CD14-positive monocyte (primary cell): ENCODE measurements at regions of chr15 and their contacts with region 1.

Region 1: DNA sequence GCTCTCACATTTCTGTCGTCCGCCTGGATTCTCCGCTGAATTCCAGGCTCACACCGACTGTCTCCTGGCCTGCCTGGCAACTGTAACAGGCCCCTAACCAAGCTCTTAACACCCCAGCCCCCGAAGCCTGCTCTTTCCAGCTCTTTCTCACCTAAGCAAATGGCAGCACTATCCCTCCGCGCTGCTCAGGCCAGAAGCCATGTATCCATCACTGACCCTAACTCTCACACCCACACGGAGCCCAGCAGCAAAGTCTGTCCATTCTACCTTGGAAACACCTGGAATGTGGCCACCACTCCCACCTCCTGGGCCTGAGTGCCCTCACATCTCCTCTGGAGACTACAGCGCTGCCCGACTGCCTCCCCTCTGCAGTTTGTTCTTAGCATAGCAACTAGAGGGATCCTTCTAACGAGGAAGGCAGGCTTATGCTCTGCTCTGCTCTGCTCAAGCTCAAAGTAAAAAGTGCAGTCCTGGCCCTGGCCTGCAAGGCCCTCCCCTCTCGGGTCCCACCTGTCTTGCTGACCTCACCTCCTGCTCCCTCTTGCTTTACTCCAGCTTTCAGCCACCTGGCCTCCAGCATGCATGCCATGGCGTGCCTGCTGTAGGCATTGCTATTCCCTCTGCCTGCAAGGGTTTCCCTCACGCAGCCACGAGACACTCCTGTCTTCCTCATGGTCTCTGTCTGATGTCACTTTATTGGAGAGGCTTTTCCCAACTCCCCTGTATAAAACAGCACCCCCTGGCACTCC is 27.2 kb downstream of the FEM1B start:
- DNase-seq: no peak
- H3K4me3 ChIP-seq: no peak overlapping the region
- H3K4me3 Mint-ChIP-seq: no peak overlapping the region
- H3K27ac ChIP-seq: no peak overlapping the region
- H3K27ac Mint-ChIP-seq: no peak overlapping the region
- H3K4me1 ChIP-seq: peaks cover 21 to 25% of the 10 kb centered on the region in 2 donors
- H3K4me1 Mint-ChIP-seq: peaks cover 29% of the 10 kb centered on the region
- H3K27me3 ChIP-seq: no peaks in the 10 kb centered on the region
- H3K27me3 Mint-ChIP-seq: peaks cover 2 to 4% (median 2%) of the 10 kb centered on the region in 3 donors
- CTCF ChIP-seq: no peak

Region 2: DNA sequence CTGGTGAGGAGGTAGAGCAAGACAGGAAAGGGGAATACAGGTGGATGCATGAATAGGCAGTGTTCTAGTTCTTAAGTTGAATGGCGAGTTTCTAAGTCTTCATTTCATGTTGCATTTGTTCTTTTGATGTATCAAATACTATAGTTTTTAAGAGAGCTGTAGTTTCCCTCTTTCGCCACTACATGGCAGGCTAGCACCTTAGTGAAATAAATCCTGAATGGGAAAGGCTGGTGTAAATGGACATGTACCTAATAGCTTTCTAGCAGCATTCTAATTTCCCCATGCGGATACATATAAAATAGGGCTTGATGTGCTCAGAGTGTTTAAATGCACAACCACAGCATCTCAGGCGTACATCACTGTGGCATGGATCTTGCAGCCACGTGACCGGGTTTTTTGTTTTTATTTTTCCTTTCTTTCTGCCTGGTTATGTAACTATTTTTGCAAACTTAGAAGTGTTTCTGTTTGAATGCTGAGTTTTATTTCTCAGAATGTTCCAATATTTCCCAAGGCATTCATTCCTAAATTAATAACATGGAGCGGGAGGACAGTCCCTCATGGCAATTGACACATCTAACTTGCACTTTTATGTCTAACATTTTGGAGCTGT is 51.7 kb before region 1 on chr15:
- intact Hi-C with region 1: loop called (anchors 2 to 10 kb)
- DNase-seq: peak; percentile 54 to 72 (median 64)
- H3K4me3 ChIP-seq: no peak overlapping the region
- H3K4me3 Mint-ChIP-seq: no peak overlapping the region
- H3K27ac ChIP-seq: no peak overlapping the region
- H3K27ac Mint-ChIP-seq: no peak overlapping the region
- H3K4me1 ChIP-seq: peaks cover 32 to 34% of the 10 kb centered on the region in 2 donors
- H3K4me1 Mint-ChIP-seq: peaks cover 31% of the 10 kb centered on the region
- H3K27me3 ChIP-seq: no peaks in the 10 kb centered on the region
- H3K27me3 Mint-ChIP-seq: peaks cover 0 to 2% (median 0%) of the 10 kb centered on the region in 3 donors
- CTCF ChIP-seq: peak; percentile 82

Region 3: DNA sequence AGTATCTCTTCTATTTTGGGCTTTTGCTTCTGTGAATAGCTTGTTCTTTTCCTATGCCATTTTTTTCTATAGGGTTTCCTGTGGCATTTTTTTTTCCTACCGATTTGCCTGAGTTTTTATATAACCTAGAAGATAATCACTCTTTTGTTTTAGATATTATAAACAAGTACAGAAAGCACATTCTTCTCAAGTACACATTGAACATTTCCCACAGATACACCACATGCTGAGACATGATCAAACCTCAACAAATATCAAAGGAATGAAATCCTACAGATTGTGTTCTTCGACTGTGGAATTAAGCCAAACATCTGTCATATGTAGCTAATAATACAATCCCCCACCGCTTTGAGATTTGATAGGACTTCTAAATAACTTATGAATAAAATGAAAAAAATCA is 36.4 kb before region 1 on chr15:
- intact Hi-C with region 1: no loop called
- DNase-seq: no peak
- H3K4me3 ChIP-seq: no peak overlapping the region
- H3K4me3 Mint-ChIP-seq: no peak overlapping the region
- H3K27ac ChIP-seq: no peak overlapping the region
- H3K27ac Mint-ChIP-seq: no peak overlapping the region
- H3K4me1 ChIP-seq: no peaks in the 10 kb centered on the region
- H3K4me1 Mint-ChIP-seq: no peaks in the 10 kb centered on the region
- H3K27me3 ChIP-seq: peaks cover 10 to 28% of the 10 kb centered on the region in 2 donors
- H3K27me3 Mint-ChIP-seq: peaks cover 2 to 19% (median 16%) of the 10 kb centered on the region in 3 donors
- CTCF ChIP-seq: no peak

Region 4: GRCh38 chr15:68631601-68632051 is 326.9 kb after region 1 on chr15:
- intact Hi-C with region 1: no loop called
- DNase-seq: no peak
- H3K4me3 ChIP-seq: no peak overlapping the region
- H3K4me3 Mint-ChIP-seq: no peak overlapping the region
- H3K27ac ChIP-seq: no peak overlapping the region
- H3K27ac Mint-ChIP-seq: no peak overlapping the region
- H3K4me1 ChIP-seq: no peaks in the 10 kb centered on the region
- H3K4me1 Mint-ChIP-seq: peaks cover 4% of the 10 kb centered on the region
- H3K27me3 ChIP-seq: no peaks in the 10 kb centered on the region
- H3K27me3 Mint-ChIP-seq: peaks cover 1 to 5% (median 4%) of the 10 kb centered on the region in 3 donors
- CTCF ChIP-seq: no peak